WTC11 (cell line): ENCODE measurements at regions of chr14 and their contacts with region 1.

Region 1: DNA sequence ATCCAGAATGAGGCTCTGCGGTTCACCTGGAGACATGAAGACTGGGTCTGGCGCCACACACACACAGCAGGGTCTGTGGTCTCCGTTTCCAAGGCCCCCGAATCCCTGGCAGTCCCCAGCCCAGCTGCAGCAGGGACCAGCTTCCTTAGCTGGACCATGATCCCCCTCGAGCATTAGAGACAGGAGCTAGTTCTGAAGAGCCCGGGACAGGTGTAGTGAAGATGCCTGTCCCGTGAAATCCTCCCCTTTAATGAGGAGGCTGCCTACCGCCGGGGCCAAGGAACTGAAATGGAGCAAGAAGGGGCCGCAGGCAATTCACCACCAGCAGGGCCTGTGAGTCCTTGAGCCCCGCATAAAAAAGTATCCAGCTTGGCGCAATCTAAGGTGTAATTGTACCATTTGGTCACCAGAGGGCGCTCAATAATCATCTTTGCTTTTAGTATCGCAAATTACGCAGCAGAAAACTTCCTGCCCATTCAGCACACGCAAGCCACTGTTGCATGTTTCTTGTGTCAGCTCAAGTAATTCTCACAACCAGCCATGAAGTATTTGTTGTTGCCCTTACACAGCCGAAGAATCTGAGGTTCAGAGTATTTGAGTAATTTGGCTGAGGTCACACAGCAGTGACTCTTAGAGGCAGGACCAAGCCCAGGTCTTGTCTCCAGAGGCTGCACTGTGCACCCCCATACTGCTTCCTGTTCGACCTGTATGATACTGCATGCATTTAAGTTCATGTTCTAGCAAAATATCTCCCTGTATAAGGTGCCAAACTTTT is 54.3 kb upstream of the PPP2R5C start:
- DNase-seq: peak; percentile 67
- ATAC-seq: peak; percentile 71
- H3K4me3 Mint-ChIP-seq: no peak overlapping the region
- H3K27ac Mint-ChIP-seq: no peak overlapping the region
- H3K4me1 Mint-ChIP-seq: peaks cover 29% of the 10 kb centered on the region
- H3K27me3 Mint-ChIP-seq: peaks cover 44% of the 10 kb centered on the region
- CTCF ChIP-seq: peak; percentile 94

Region 2: DNA sequence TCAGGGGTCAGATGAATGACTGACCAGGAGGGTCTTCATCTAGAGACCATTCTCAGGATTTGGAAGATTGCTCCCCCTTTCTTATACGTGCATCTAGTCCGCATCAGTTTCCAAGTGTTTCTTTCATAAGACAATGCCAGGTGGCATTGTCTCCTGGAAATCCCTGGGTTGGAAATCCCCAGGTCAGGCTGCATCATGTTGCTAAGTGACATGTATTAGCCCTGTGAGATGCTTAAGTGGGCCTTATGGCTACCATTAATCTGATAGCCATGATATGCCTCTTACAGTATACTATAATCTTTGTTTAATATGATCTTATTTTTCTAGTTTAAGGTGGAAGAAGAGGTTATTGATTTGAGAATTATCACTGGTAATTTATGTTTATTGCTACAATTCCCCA is 53.2 kb before region 1 on chr14:
- CTCF ChIA-PET with region 1: no interaction called
- POLR2A ChIA-PET with region 1: no interaction called
- DNase-seq: no peak
- ATAC-seq: no peak
- H3K4me3 Mint-ChIP-seq: no peak overlapping the region
- H3K27ac Mint-ChIP-seq: no peak overlapping the region
- H3K4me1 Mint-ChIP-seq: no peaks in the 10 kb centered on the region
- H3K27me3 Mint-ChIP-seq: peaks cover 34% of the 10 kb centered on the region
- CTCF ChIP-seq: no peak

Region 3: GRCh38 chr14:101721951-101722661 is 14.9 kb after region 1 on chr14:
- CTCF ChIA-PET with region 1: interaction called, 24 read pairs
- POLR2A ChIA-PET with region 1: no interaction called
- DNase-seq: no peak
- ATAC-seq: peak; percentile 45
- H3K4me3 Mint-ChIP-seq: peak overlapping the region; percentile 21; the same call in 1 of the 2 replicates
- H3K27ac Mint-ChIP-seq: peak overlapping the region; percentile 83
- H3K4me1 Mint-ChIP-seq: peaks cover 28% of the 10 kb centered on the region
- H3K27me3 Mint-ChIP-seq: no peaks in the 10 kb centered on the region
- CTCF ChIP-seq: no peak

Region 4: GRCh38 chr14:101761032-101761880 is 54.0 kb after region 1 on chr14 and contains the start of gene PPP2R5C:
- CTCF ChIA-PET with region 1: interaction called, 23 read pairs
- POLR2A ChIA-PET with region 1: no interaction called
- DNase-seq: peak; percentile 83
- ATAC-seq: peak; percentile 58
- H3K4me3 Mint-ChIP-seq: peak within 1 kb of the TSS; percentile 84
- H3K27ac Mint-ChIP-seq: no peak within 1 kb of the TSS
- H3K4me1 Mint-ChIP-seq: peaks cover 11% of the 10 kb centered on the region
- H3K27me3 Mint-ChIP-seq: peaks cover 63% of the 10 kb centered on the region
- CTCF ChIP-seq: no peak
- total RNA-seq, gene PPP2R5C: 89.9 to 105 TPM (median 99.9 TPM) in 3 replicates